ENCODE measurements at regions of chr1 and their contacts with region 1.

Region 1: GRCh38 chr1:167533851-167534300 is 15.5 kb upstream of the CD247 start:
- DNase-seq: peak; percentile 18
- H3K4me3 ChIP-seq: no peak overlapping the region
- H3K27ac ChIP-seq: no peak overlapping the region
- H3K27me3 ChIP-seq: peaks cover 5% of the 10 kb centered on the region
- CTCF ChIP-seq: peak; percentile 96

Region 2: GRCh38 chr1:166910396-166910994 is 623.4 kb before region 1 on chr1:
- CTCF ChIA-PET with region 1: interaction called, 23 read pairs
- POLR2A ChIA-PET with region 1: no interaction called
- DNase-seq: peak; percentile 43
- H3K4me3 ChIP-seq: no peak overlapping the region
- H3K27ac ChIP-seq: no peak overlapping the region
- H3K27me3 ChIP-seq: no peaks in the 10 kb centered on the region
- CTCF ChIP-seq: peak; percentile 67

Region 3: GRCh38 chr1:167263819-167264464 is 269.9 kb before region 1 on chr1:
- CTCF ChIA-PET with region 1: interaction called, 68 read pairs
- POLR2A ChIA-PET with region 1: no interaction called
- DNase-seq: no peak
- H3K4me3 ChIP-seq: no peak overlapping the region
- H3K27ac ChIP-seq: no peak overlapping the region
- H3K27me3 ChIP-seq: no peaks in the 10 kb centered on the region
- CTCF ChIP-seq: no peak

Region 4: DNA sequence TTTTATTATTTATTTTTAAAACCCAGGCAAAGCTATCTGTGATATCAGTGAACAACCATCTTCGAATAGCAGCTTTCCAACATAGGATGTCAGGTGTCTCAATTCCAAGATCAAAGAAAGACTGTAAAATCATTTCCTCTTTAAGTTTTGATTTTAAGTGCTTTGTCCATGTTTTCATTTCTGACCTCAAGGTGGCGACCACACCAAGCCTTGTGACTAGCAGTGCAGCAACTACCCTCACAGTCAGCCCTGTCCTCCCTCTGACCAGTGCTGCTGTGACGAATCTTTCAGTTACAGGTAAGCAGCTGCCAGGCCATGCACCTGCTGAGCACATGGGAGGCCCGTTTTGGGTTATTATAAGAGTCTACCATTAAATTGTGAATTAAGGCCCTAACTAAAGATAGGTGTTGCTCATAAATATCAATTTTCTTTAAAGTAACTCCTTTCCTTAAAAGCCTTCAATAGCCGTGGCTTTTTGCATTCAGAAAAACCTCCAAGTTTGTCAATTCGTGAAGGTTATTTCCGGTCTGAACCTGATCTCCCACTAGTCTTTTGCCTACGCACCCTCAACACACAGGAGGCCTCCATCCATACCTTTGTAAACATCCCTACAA is 132.5 kb before region 1 on chr1:
- CTCF ChIA-PET with region 1: interaction called, 10 read pairs
- POLR2A ChIA-PET with region 1: no interaction called
- DNase-seq: peak; percentile 2
- H3K4me3 ChIP-seq: no peak overlapping the region
- H3K27ac ChIP-seq: no peak overlapping the region
- H3K27me3 ChIP-seq: no peaks in the 10 kb centered on the region
- CTCF ChIP-seq: peak; percentile 65

Region 5: GRCh38 chr1:167454894-167455785 is 78.7 kb before region 1 on chr1:
- CTCF ChIA-PET with region 1: interaction called, 24 read pairs
- POLR2A ChIA-PET with region 1: no interaction called
- DNase-seq: no peak
- H3K4me3 ChIP-seq: peak overlapping the region; percentile 70
- H3K27ac ChIP-seq: no peak overlapping the region
- H3K27me3 ChIP-seq: peaks cover 24% of the 10 kb centered on the region
- CTCF ChIP-seq: no peak